ENCODE measurements at regions of chr7 and their contacts with region 1.

Region 1: GRCh38 chr7:74206589-74207120 is 3.2 kb upstream of the LAT2 start:
- DNase-seq: peak; percentile 80
- H3K4me3 Mint-ChIP-seq: no peak overlapping the region
- H3K27ac Mint-ChIP-seq: no peak overlapping the region
- H3K4me1 Mint-ChIP-seq: peaks cover 10% of the 10 kb centered on the region
- H3K27me3 Mint-ChIP-seq: no peaks in the 10 kb centered on the region
- CTCF ChIP-seq: peak; percentile 97

Region 2: DNA sequence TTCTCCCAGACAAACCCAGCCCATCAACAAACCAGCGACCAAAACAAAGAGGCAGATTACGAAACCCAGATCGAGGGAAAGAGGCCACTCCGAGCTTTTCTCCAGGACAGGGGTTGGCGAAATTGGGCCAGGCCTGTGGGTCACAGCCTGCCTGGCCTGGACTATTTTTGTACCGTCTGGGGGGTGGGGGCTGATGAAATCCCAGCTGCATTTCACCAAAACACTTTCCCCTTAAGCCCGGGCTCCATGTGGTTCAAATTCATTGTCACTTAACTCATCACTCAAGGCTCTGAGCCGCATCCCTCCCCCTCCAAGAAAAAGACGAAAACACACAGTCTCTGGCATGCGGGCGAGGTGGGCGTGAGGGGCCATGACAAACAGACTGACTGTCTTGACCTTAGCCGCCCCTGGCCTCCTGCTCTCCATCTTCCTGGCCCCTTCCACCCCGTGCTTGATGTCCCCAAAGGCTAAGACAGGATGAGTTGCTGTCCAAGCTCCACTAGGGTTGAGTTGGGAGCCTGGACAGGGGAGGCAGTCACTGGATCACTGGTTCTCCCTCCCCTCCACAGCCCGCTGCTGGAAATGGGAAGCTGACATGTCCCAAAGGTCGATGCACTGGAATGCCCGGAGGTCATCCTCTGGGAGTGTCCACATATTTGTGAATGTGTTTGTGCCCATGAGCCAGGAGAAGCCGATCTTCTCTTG is 326.5 kb before region 1 on chr7:
- CTCF ChIA-PET with region 1: no interaction called
- POLR2A ChIA-PET with region 1: no interaction called
- intact Hi-C with region 1: no loop called
- DNase-seq: no peak
- H3K4me3 Mint-ChIP-seq: no peak overlapping the region
- H3K27ac Mint-ChIP-seq: no peak overlapping the region
- H3K4me1 Mint-ChIP-seq: peaks cover 7% of the 10 kb centered on the region
- H3K27me3 Mint-ChIP-seq: no peaks in the 10 kb centered on the region
- CTCF ChIP-seq: no peak

Region 3: GRCh38 chr7:74068393-74069085 is 138.1 kb before region 1 on chr7:
- CTCF ChIA-PET with region 1: interaction called, 30 read pairs
- POLR2A ChIA-PET with region 1: no interaction called
- intact Hi-C with region 1: loop called (anchors 2 kb)
- DNase-seq: no peak
- H3K4me3 Mint-ChIP-seq: no peak overlapping the region
- H3K27ac Mint-ChIP-seq: no peak overlapping the region
- H3K4me1 Mint-ChIP-seq: no peaks in the 10 kb centered on the region
- H3K27me3 Mint-ChIP-seq: no peaks in the 10 kb centered on the region
- CTCF ChIP-seq: no peak

Region 4: DNA sequence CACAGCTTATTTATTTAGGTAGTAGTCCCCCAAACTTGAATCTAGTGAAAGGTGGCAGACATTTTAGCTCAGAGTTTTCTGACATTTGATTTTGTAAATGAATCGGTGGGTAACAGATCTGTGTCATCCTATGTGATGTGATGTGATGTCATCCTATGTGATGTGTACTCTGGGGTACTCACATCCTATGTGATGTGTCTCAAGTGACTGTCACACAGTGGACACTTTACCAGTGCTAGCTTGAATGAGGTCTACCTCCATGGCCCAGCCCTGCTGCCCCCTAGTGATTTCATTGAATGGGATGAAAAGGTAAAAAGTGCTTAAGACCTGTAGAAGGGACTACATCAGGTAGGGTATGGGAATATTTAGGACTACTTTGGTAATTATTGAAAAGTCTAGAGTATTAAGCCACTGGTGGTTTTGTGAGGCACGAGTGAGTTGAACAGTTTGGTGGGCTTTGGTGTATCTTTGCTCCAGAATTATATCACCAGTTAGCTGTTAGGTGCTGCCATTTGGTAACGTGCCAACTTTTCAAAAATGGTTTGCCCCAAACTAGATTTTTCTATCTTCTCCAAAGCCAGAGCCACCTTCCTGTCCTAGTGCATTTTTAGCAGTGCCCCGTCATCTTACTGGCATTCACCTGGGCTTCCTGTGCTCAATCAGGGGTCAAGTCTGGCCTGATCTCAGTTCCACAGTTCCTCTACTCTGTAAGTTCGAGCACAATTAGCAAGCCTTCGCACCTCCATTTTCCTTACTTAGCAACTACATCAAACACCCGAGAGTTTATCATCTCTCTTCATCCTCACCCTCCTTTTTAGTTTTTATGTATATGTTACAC is 22.8 kb before region 1 on chr7:
- CTCF ChIA-PET with region 1: interaction called, 10 read pairs
- POLR2A ChIA-PET with region 1: interaction called, 3 read pairs
- intact Hi-C with region 1: no loop called
- DNase-seq: peak; percentile 46
- H3K4me3 Mint-ChIP-seq: peak overlapping the region; percentile 4
- H3K27ac Mint-ChIP-seq: no peak overlapping the region
- H3K4me1 Mint-ChIP-seq: peaks cover 46% of the 10 kb centered on the region
- H3K27me3 Mint-ChIP-seq: no peaks in the 10 kb centered on the region
- CTCF ChIP-seq: peak; percentile 20

Region 5: DNA sequence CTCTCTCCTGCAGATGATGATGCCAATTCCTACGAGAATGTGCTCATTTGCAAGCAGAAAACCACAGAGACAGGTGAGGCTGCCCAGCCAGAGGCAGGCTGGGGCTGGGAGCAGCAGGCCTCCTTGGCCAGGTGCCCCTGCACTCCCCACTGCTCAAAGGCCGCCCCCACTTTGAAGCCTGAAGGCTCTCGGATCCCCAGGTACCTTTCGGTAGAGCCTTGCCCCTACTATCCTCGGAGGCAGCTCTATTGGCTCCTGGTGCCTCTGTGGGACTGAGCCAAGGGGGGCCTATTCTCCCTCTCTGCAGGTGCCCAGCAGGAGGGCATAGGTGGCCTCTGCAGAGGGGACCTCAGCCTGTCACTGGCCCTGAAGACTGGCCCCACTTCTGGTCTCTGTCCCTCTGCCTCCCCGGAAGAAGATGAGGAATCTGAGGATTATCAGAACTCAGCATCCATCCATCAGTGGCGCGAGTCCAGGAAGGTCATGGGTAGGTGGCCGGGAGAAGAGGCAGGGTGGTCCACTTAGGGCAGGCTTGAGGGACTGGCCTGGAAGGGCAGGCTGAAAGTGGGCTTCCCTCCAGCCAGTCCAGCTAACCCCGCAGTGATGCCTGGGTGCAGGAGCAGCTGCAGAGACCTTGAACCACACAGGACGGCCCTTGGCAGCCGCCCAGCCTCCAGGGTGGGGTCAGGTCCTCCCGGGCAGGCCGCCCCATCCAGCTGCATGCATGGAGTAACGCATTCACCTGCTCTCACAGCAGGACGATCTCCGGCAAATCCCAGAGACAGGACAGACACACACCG is 17.3 kb after region 1 on chr7:
- CTCF ChIA-PET with region 1: interaction called, 10 read pairs
- POLR2A ChIA-PET with region 1: no interaction called
- intact Hi-C with region 1: no loop called
- DNase-seq: no peak
- H3K4me3 Mint-ChIP-seq: no peak overlapping the region
- H3K27ac Mint-ChIP-seq: no peak overlapping the region
- H3K4me1 Mint-ChIP-seq: no peaks in the 10 kb centered on the region
- H3K27me3 Mint-ChIP-seq: no peaks in the 10 kb centered on the region
- CTCF ChIP-seq: no peak

Region 6: DNA sequence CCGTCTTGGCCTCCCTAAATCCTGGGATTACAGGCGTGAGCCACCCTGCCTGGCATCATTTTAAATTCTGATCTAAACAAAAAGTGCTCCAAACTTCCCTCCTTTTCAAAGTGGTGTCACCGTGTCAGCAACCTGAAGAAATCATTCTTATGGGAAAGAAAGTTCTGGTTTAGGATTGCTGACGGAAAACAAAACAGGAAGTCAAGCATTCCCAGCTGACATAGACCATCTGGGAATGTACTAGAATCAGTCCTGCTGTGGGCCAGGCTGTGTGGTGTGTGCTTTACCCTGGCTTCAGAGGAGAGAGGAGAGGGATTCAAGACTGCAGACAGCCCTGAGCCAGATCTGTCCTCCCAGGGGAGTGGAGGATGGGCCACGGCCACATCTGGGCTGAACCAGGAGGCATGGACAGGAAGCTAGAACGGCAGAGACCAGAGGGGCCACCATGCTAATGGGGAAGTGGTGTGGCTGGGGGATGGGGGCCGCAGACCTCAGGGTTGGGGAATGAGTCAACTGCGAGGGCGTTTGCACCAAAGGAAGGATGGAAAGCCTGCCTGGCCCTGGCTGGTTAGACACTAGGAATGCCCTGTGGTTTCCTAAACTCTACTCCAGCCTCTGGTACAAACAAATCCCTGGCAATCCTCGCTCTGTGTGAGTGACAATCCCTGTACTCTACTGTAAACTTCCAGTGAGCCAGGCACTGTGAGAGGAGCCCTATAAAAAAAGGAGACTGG is 65.8 kb after region 1 on chr7:
- CTCF ChIA-PET with region 1: interaction called, 12 read pairs
- POLR2A ChIA-PET with region 1: no interaction called
- intact Hi-C with region 1: no loop called
- DNase-seq: peak; percentile 71
- H3K4me3 Mint-ChIP-seq: no peak overlapping the region
- H3K27ac Mint-ChIP-seq: peak overlapping the region; percentile 90
- H3K4me1 Mint-ChIP-seq: peaks cover 14% of the 10 kb centered on the region
- H3K27me3 Mint-ChIP-seq: no peaks in the 10 kb centered on the region
- CTCF ChIP-seq: no peak

Region 7: DNA sequence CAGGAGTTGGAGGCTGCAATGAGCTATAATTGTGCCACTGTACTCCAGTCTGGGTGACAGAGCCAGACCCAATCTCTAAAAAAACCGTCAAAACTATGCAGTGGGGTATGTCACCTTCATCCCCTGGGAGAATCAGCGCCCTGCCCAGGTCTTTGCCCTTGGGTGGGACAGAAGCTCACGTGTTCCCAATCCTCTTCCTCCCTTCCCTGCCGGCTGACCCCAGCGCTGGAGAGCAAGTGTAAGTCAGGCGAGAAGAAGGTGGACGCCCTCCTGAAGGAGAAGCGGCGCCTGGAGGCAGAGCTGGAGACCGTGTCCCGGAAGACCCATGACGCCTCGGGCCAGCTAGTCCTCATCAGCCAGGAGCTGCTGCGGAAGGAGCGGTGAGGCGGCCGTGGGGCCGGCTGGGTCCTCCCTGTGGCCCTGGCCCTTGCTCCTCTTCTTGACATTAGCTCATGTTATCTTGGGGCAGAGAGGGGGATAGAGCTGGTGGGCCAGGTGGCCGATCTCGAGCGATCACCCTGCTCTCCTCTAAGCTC is 182.3 kb after region 1 on chr7:
- CTCF ChIA-PET with region 1: interaction called, 85 read pairs
- POLR2A ChIA-PET with region 1: interaction called, 4 read pairs
- intact Hi-C with region 1: loop called (anchors 1 kb)
- DNase-seq: no peak
- H3K4me3 Mint-ChIP-seq: no peak overlapping the region
- H3K27ac Mint-ChIP-seq: no peak overlapping the region
- H3K4me1 Mint-ChIP-seq: peaks cover 3% of the 10 kb centered on the region
- H3K27me3 Mint-ChIP-seq: no peaks in the 10 kb centered on the region
- CTCF ChIP-seq: no peak

Region 8: DNA sequence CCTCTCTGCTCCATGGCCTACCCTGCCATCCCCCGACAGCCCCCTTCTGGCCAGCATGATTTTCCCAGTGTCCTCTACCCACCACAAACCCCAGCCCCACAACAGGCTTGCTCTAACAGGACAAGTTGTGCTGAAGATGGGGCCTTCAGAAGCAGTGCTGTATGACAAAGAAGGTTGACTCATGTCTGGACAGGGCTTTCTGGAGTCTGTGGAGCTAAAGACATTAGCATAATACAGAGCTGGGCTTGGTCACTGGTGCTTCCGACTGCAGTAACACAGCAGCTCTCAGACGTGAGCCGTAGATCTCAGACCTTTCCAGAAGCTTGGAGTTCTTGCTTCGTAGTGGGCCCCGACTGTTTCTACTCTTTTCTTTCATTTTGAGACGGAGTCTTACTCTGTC is 347.5 kb after region 1 on chr7:
- CTCF ChIA-PET with region 1: no interaction called
- POLR2A ChIA-PET with region 1: no interaction called
- intact Hi-C with region 1: no loop called
- DNase-seq: no peak
- H3K4me3 Mint-ChIP-seq: no peak overlapping the region
- H3K27ac Mint-ChIP-seq: no peak overlapping the region
- H3K4me1 Mint-ChIP-seq: no peaks in the 10 kb centered on the region
- H3K27me3 Mint-ChIP-seq: no peaks in the 10 kb centered on the region
- CTCF ChIP-seq: no peak

Measured in MCF 10A (cell line).